ENCODE measurements at regions of chr17 and their contacts with region 1.

Region 1: DNA sequence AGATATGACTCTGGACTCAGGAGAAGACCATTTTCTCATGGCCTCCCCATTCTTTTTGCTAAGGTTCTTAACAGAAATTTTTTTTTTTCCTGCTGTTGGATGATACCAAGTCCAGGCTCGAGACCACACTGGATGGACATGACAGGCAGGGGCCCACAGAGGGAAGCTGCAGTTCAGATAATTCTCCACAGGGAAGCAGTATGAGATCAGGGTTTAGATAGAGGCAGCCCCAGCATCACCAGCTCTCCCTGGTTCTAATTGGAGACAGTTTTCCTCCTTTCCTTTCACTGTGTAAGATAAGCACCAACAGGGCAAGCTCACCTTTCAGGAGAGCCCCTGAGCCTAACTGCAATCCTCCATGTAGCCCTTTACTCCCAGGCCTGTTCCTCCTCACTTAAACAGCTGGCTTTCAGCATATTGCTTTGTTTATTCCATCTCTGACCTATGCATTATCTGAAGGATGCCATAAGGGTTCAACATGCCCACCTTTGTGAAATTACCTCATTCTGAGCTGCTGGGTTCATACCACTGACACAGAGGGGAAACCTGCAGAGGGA is 108.1 kb downstream of the SNX11 start:
- DNase-seq: peak; percentile 75

Region 2: GRCh38 chr17:48074315-48075081 is 141.2 kb before region 1 on chr17:
- CTCF ChIA-PET with region 1: interaction called, 12 read pairs
- POLR2A ChIA-PET with region 1: no interaction called
- DNase-seq: peak; percentile 63

Region 3: GRCh38 chr17:48228721-48229120 is 13.1 kb after region 1 on chr17:
- CTCF ChIA-PET with region 1: interaction called, 11 read pairs
- POLR2A ChIA-PET with region 1: interaction called, 4 read pairs
- DNase-seq: no peak

Measured in HEK293T (cell line).